ENCODE measurements at regions of chr1 and their contacts with region 1.

Region 1: DNA sequence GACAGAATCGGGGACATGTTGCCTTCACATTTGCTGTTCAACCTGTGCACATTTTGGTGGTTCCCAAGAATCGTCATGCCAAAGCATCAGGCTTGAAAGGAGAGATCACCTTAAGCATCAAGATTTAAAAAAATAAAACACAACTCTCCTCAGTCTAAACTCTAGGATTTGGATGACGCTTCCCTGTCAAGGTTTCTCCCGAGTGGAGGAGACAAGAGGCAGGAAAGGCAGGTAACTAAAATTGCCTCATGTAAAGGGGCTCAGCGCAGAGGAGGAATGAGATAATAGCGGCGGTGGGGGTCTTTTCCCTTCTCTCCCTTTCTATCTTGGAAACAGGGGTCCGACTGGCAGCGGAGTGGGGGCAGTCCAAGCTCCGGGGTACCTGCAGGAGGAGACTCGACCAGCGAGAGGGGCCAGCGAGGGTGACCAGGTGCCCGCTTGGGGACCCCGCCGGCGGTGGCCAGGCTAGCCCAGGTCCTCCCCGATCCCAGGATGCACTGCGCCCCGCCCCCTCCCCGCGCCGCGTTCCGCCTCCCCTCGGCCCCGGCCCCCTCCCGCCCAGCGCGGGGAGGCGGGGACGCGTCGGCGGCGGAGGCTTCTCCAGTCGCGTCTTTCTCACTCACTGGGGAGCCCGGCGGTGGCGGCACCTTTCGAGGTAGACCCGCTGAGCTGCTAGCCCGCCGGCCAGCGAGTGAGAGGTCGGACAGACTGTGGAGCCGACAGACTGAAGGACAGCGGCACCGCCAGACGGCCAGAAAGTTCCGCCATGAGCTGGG is at the start of gene FNBP1L:
- DNase-seq: peak; percentile 80
- CTCF ChIP-seq: no peak

Region 2: DNA sequence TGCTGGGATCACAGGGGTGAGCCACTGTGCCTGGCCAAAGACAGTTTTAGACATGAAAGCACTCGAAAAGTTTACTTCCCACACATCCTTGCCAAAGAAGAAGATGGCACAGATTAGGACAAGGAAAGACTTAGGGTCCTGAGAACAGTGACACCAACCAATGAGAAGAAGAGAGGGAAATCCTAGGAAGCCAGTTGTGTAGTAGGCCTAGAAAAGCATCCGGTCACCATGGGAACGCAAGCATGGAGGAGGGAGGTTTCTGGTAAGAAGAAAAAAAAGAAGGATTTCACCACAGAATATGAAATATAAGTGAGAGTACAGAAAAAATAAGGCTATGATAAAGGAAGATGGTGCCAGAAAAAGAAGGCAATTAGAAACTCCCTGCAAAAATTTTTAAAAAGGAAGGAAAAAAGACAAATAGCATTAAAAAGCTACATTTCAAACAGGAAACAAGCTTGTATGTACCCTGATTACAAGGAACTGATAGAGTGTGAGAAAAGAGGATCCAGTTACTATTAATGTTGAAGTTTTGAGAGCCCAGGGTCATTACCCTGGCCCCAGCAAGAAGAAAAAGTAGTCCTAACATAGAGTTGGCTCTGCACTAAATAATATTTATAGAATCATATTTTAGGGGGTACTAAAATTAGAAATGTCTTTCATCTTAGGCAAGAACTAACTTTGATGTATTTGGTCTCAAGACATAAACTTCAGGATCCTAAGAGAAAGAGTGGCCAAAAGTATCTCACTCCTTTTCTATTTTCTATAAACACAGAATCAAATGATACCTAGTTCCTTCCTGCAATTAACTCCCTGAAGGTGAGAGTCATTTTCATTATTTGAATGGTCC is 502.6 kb before region 1 on chr1:
- in situ Hi-C with region 1: no loop called
- DNase-seq: no peak
- CTCF ChIP-seq: no peak

Region 3: DNA sequence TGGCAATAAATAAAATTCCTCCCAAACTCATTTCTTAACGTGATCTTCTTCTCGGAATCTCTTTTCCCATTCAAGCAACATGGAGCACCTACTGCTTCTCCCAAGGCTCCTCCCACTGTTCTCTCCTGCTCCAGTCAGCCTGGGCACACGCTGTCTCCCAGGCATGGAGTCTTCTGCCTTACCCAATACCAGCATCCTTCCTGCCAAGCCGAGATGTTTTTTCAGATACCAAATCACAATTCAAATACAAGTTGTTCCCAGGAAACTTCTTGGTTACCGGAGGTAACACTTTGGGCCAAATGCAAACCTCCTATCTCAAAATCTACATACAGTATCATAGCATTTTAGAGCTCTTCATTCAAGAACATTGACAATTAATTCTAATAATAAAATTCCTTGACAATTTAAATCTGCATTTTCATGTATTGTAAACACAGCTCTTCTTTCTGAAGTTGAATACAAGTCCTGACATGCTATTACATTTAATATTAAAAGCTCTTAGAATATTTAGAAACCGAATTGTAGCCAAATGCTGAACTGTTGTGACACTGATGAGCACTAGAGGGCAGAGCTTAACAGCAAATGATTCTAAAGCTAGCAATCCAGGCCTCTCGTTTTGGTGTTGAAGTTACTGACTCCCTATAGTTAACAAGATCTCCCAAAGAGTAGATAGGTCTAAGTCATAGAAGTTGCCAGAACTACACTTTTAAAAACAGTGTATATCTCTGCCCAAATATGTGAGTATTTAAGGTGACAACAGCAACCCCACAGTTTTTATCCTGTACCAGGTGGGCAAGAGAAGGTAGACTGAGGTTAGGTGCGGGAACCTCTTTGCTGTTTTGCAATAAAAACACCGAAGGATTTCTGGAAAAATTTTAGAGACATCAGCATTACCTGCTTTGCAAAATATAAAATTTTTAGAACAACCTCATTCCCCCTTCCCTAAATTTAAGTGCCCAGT is 181.7 kb after region 1 on chr1:
- in situ Hi-C with region 1: loop called (anchors 10 kb)
- DNase-seq: peak; percentile 70
- CTCF ChIP-seq: peak; percentile 82

Region 4: DNA sequence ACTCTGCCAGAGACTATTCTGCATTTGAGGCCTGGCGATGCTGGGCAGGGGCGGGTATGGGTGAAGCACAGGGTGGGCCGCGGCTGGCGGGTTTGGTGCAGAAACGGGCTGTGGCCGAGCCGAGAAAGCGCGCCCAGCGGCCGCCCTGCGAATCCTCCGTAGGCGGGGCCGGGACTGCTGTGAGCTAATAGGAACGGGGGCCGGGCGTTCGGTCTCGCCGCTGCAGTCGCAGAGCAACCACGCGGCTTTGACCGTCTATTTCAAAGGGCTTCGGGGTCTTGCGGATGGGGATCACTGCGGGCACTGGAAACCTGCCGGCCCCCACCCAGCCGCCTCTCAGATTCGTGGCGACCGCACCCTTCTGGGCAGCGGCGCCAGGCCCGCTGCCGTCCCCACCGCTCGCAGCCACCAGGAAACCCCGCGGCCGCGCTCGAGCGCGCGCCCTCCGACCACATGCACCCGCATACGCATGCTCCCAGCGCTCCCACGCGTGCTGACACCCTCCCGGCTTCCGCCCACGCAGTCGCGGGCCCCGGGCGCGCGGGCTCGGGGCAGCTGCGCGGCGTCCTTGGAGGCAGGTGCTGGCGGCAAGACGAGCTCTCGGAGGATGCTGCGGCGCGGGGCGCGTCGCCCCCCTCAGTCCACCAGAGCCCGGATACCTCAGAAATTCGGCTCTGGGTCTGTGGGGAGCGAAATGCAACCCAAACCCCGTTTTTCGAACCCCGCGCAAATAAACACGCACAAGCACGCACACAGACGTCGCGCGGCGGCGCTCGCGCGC is 398.7 kb after region 1 on chr1:
- in situ Hi-C with region 1: loop called (anchors 25 kb)
- DNase-seq: peak; percentile 89
- CTCF ChIP-seq: peak; percentile 36